HepG2 (cell line): ENCODE measurements at regions of chr10 and their contacts with region 1.

Region 1: GRCh38 chr10:32055813-32056600 is at the start of gene KIF5B:
- DNase-seq: peak; percentile 74
- ATAC-seq: peak; percentile 88
- H3K4me3 ChIP-seq: peak within 1 kb of the TSS; percentile 96 to 99 (median 97)
- H3K27ac ChIP-seq: peak within 1 kb of the TSS; percentile 91
- H3K4me1 ChIP-seq: peaks cover 69% of the 10 kb centered on the region
- H3K27me3 ChIP-seq: no peaks in the 10 kb centered on the region; a peak in 1 of 5 replicates
- CTCF ChIP-seq: no peak
- EP300 ChIP-seq: 0 out of 4 replicates have a peak, but pooled peaks of 1 of the 2 experiments have one; percentile 6
- POLR2A ChIP-seq: peak; percentile 97
- RAD21 ChIP-seq: peak; percentile 58; the same call in 1 of the 2 replicates
- total RNA-seq, gene KIF5B: 133 and 183 TPM in 2 replicates

Region 2: DNA sequence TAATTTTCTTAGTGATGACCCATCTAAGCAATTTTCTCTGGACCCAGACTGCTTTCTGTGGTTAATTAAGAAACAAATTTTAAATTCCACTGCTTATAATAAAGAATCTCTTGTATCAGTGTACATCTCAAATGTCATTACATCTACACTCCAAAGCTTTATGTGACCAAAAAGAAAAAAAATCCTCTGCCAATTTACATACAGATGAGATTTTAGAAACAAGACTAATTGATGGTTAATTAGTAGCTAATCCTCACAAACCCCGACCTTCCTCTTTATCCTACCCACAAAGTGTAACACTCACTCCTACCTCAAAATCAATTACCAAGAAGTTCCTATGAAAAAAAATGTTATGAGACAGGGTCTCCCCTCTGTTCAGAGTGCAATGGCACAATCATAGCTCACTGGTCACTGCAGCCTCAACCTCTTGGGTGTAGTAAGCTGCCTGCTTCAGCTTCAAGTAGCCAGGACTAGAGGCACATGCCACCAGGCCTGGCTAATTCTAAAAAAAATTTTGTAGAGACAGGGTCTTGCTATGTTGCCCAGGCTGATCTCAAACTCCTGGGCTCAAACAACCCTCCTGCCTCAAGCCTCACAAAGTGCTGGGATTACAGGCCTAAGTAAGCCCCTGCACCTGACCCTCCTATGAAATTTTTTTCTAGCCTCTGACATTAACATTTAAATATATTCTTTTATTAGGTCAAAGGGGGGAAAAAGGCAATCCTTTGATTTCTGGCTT is 14.5 kb before region 1 on chr10:
- CTCF ChIA-PET with region 1: no interaction called
- POLR2A ChIA-PET with region 1: no interaction called
- in situ Hi-C with region 1: no loop called
- intact Hi-C with region 1: loop called (anchors 2 kb)
- DNase-seq: no peak
- ATAC-seq: peak; percentile 55
- H3K4me3 ChIP-seq: no peak overlapping the region
- H3K27ac ChIP-seq: no peak overlapping the region
- H3K4me1 ChIP-seq: peaks cover 38% of the 10 kb centered on the region
- H3K27me3 ChIP-seq: no peaks in the 10 kb centered on the region
- CTCF ChIP-seq: no peak
- EP300 ChIP-seq: no peak
- POLR2A ChIP-seq: no peak
- RAD21 ChIP-seq: no peak

Region 3: DNA sequence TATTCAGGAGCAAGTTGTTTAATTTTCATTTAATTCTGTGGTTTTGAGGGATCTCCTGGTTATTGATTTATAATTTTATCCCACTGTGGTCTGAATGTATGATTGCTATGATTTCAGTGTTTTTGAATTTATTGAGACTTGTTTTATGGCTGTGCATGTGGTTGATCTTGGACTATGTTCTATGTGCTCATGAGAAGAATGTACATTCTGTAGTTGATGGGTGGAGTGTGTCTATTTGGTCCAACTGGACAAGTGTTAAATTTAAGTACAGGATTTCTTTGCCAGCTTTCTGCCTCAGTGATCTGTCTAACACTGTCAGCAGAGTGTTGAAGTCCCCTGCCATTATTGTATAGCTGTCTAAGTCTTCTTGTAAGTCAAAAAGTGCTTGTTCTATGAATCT is 35.0 kb after region 1 on chr10:
- CTCF ChIA-PET with region 1: no interaction called
- POLR2A ChIA-PET with region 1: no interaction called
- in situ Hi-C with region 1: no loop called
- intact Hi-C with region 1: no loop called
- DNase-seq: no peak
- ATAC-seq: no peak
- H3K4me3 ChIP-seq: no peak overlapping the region
- H3K27ac ChIP-seq: no peak overlapping the region
- H3K4me1 ChIP-seq: peaks cover 19% of the 10 kb centered on the region
- H3K27me3 ChIP-seq: no peaks in the 10 kb centered on the region
- CTCF ChIP-seq: no peak
- EP300 ChIP-seq: no peak
- POLR2A ChIP-seq: no peak
- RAD21 ChIP-seq: no peak

Region 4: GRCh38 chr10:32104622-32105509 is 48.9 kb after region 1 on chr10:
- CTCF ChIA-PET with region 1: no interaction called
- POLR2A ChIA-PET with region 1: interaction called, 6 read pairs
- in situ Hi-C with region 1: no loop called
- intact Hi-C with region 1: loop called (anchors 1 kb)
- DNase-seq: peak; percentile 86
- ATAC-seq: peak; percentile 62
- H3K4me3 ChIP-seq: peak overlapping the region; percentile 17 to 58 (median 17); a peak in 3 of 6 replicates
- H3K27ac ChIP-seq: peak overlapping the region; percentile 84
- H3K4me1 ChIP-seq: peaks cover 45% of the 10 kb centered on the region
- H3K27me3 ChIP-seq: no peaks in the 10 kb centered on the region
- CTCF ChIP-seq: no peak
- EP300 ChIP-seq: peak in 1 of 2 experiments; percentile 46; a peak in 2 of 4 replicates
- POLR2A ChIP-seq: no peak
- RAD21 ChIP-seq: no peak

Region 5: DNA sequence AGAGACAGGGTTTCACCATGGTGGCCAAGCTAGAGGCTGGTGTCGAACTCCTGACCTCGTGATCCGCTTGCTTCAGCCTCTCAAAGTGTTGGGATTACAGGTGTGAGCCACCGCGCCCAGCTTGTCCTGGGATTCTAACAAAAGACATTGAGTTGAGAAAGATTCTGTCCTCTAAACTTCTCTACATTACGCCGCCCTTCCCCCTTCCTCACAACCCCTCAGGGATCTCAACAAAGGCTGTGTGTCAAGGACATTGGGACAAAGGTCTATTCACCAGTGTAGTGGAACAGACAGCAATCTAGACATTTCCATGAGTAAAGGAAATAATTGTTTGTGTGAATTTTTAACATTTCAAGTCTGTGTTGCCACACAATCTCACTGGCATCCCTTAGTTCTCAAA is 69.0 kb after region 1 on chr10:
- CTCF ChIA-PET with region 1: no interaction called
- POLR2A ChIA-PET with region 1: no interaction called
- in situ Hi-C with region 1: loop called (anchors 5 kb)
- intact Hi-C with region 1: no loop called
- DNase-seq: peak; percentile 95
- ATAC-seq: peak; percentile 76
- H3K4me3 ChIP-seq: no peak overlapping the region
- H3K27ac ChIP-seq: peak overlapping the region; percentile 43
- H3K4me1 ChIP-seq: peaks cover 77% of the 10 kb centered on the region
- H3K27me3 ChIP-seq: no peaks in the 10 kb centered on the region
- CTCF ChIP-seq: no peak
- EP300 ChIP-seq: peak in 1 of 2 experiments; percentile 86; a peak in 2 of 4 replicates
- POLR2A ChIP-seq: no peak
- RAD21 ChIP-seq: no peak

Region 6: GRCh38 chr10:32149252-32149955 is 93.4 kb after region 1 on chr10:
- CTCF ChIA-PET with region 1: no interaction called
- POLR2A ChIA-PET with region 1: no interaction called
- in situ Hi-C with region 1: no loop called
- intact Hi-C with region 1: loop called (anchors 10 kb)
- DNase-seq: no peak
- ATAC-seq: no peak
- H3K4me3 ChIP-seq: no peak overlapping the region
- H3K27ac ChIP-seq: no peak overlapping the region
- H3K4me1 ChIP-seq: peaks cover 61% of the 10 kb centered on the region
- H3K27me3 ChIP-seq: no peaks in the 10 kb centered on the region
- CTCF ChIP-seq: no peak
- EP300 ChIP-seq: no peak
- POLR2A ChIP-seq: no peak
- RAD21 ChIP-seq: no peak

Region 7: DNA sequence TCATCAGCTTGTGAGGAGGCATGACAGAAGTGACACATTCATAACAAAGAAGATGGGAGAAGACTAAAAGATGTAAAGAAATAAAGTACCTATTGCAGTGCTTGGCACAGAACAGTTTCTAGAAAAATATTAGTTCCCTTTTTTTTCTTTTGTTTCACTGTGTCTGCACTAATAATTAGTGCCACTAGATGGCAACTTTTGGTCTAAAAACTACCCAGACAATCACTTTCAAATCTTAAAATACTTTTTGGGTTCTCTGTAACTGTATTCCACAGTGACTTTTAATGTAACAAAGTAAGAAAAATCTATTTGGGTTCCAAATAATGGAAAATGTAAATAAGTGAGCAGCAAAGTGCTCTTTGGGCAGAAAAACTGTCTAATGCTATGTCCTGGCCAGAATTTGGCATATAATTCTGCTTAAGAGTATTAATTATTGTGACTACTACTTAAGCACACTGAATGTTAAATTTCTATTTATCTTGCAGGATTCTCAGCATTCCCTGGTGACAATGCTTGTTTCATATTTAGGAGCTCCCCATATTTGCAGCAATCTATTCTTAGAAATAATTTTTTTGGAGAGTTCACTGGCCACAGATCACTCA is 135.0 kb after region 1 on chr10:
- CTCF ChIA-PET with region 1: no interaction called
- POLR2A ChIA-PET with region 1: interaction called, 3 read pairs
- in situ Hi-C with region 1: no loop called
- intact Hi-C with region 1: loop called (anchors 5 kb)
- DNase-seq: peak; percentile 25
- ATAC-seq: peak; percentile 26; the same call in 1 of the 3 replicates
- H3K4me3 ChIP-seq: no peak overlapping the region
- H3K27ac ChIP-seq: no peak overlapping the region
- H3K4me1 ChIP-seq: peaks cover 28% of the 10 kb centered on the region
- H3K27me3 ChIP-seq: no peaks in the 10 kb centered on the region
- CTCF ChIP-seq: peak; percentile 49
- EP300 ChIP-seq: no peak
- POLR2A ChIP-seq: no peak
- RAD21 ChIP-seq: no peak

Region 8: DNA sequence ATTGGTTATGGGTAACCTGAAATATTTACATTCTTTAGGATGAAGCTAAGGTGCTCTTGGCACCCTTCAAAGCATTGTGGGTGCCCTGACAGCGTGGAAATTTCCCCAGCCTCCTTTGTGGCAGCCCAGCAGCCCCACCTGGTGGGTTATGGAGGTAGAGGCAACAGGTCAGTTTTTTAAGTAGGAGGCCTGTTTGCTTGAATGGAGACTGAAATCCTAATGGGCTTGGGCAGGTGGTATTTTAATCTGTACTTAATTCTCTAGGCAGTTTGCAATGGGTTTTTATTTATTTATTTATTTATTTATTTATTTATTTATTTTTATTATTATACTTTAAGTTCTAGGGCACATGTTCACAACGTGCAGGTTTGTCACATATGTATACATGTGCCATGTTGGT is 151.5 kb after region 1 on chr10:
- CTCF ChIA-PET with region 1: interaction called, 3 read pairs
- POLR2A ChIA-PET with region 1: no interaction called
- in situ Hi-C with region 1: no loop called
- intact Hi-C with region 1: loop called (anchors 2 kb)
- DNase-seq: peak; percentile 59
- ATAC-seq: peak; percentile 81
- H3K4me3 ChIP-seq: peak overlapping the region in 1 of 3 experiments; percentile 20; a peak in 1 of 6 replicates
- H3K27ac ChIP-seq: no peak overlapping the region
- H3K4me1 ChIP-seq: peaks cover 35% of the 10 kb centered on the region
- H3K27me3 ChIP-seq: 0 out of 5 replicates have a peak, but pooled peaks cover 0 to 1% of the 10 kb centered on the region in 2 experiments
- CTCF ChIP-seq: peak; percentile 86
- EP300 ChIP-seq: no peak
- POLR2A ChIP-seq: no peak
- RAD21 ChIP-seq: peak; percentile 84